Mammary epithelial cell (primary cell): ENCODE measurements at regions of chr15 and their contacts with region 1.

Region 1: GRCh38 chr15:65054333-65055200 is 9.4 kb downstream of the SLC51B start:
- DNase-seq: peak; percentile 46
- H3K4me3 ChIP-seq: no peak overlapping the region
- H3K27ac ChIP-seq: no peak overlapping the region
- H3K4me1 ChIP-seq: peaks cover 11% of the 10 kb centered on the region
- H3K27me3 ChIP-seq: no peaks in the 10 kb centered on the region
- CTCF ChIP-seq: peak; percentile 93 to 96

Region 2: GRCh38 chr15:65086017-65086679 is 31.6 kb after region 1 on chr15:
- CTCF ChIA-PET with region 1: no interaction called
- dilution Hi-C with region 1: no loop called
- in situ Hi-C with region 1: no loop called
- intact Hi-C with region 1: loop called (anchors 1 kb)
- DNase-seq: peak; percentile 44
- H3K4me3 ChIP-seq: no peak overlapping the region
- H3K27ac ChIP-seq: no peak overlapping the region
- H3K4me1 ChIP-seq: peaks cover 37% of the 10 kb centered on the region
- H3K27me3 ChIP-seq: no peaks in the 10 kb centered on the region
- CTCF ChIP-seq: peak; percentile 64 to 69

Region 3: DNA sequence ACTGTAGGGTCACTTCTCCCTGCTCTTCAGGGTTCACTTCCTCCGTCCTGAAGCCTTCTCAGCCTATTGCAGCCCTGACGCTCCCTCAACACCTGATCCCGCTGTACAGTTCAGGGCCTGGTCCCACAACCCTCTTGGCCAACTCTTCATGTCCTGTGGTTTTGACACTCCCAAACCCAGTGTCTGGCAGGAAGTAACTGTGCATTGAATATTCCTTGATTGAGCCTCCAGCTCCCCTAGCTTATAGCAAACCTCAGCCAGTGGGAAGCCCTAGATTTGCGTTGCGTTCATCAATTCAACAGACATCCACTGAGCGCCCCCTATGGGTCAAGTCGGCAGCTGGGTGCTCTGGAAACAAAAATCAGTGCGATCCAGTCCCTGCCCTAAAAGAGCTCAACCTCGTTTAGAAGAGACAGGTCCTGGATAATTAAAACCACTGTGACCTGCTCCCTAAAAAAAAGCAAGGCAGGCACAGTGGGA is 46.9 kb after region 1 on chr15:
- CTCF ChIA-PET with region 1: interaction called, 7 read pairs
- dilution Hi-C with region 1: no loop called
- in situ Hi-C with region 1: loop called in 1 of 2 experiments (anchors 5 kb)
- intact Hi-C with region 1: loop called (anchors 1 kb)
- DNase-seq: peak; percentile 40
- H3K4me3 ChIP-seq: no peak overlapping the region
- H3K27ac ChIP-seq: no peak overlapping the region
- H3K4me1 ChIP-seq: no peaks in the 10 kb centered on the region
- H3K27me3 ChIP-seq: no peaks in the 10 kb centered on the region
- CTCF ChIP-seq: peak; percentile 86 to 91

Region 4: DNA sequence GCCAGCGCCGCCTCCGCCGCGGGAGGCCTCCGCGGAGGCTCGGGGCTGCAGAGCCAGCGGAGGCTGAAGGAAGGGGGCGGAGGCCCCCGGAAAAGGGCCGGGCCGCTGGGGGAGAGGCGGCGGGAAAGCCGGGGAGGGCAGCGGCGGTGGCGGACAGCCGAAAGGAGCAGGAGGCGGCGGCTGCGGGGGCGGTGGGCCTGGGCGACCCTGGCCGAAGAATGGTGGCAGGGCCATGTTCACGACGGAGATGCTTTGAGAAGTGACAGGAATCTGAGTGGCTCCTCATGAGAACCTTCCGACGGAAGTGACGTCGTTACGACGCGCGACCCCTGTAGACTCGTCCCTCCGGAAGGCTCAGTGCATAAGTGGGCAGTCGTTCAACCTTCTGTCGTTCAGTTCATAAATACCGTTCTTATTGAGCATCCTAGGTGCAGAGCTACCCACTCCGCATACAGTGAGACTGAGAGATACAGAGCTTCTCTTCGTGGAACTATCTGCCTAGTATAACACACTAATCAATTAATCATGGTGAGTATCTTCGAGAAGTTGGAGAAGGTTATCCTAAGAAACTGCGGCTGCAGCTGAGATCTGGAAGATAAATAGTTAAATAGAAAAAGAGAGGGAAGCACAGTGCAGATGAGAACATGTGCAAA is 79.1 kb after region 1 on chr15 and contains the start of gene PDCD7:
- CTCF ChIA-PET with region 1: no interaction called
- dilution Hi-C with region 1: loop called (anchors 5 kb)
- in situ Hi-C with region 1: no loop called
- intact Hi-C with region 1: loop called (anchors 1 kb)
- DNase-seq: peak; percentile 85
- H3K4me3 ChIP-seq: peak within 1 kb of the TSS; percentile 50 to 78 (median 73)
- H3K27ac ChIP-seq: peak within 1 kb of the TSS; percentile 73
- H3K4me1 ChIP-seq: peaks cover 8% of the 10 kb centered on the region
- H3K27me3 ChIP-seq: no peaks in the 10 kb centered on the region
- CTCF ChIP-seq: no peak
- total RNA-seq, gene PDCD7: 16.7 to 22.5 TPM